ENCODE measurements at regions of chr15 and their contacts with region 1.

Region 1: GRCh38 chr15:39054128-39054732 is 489.6 kb upstream of the RASGRP1 start:
- DNase-seq: no peak
- H3K4me3 ChIP-seq: no peak overlapping the region
- H3K27ac ChIP-seq: no peak overlapping the region
- H3K4me1 ChIP-seq: peaks cover 0 to 6% (median 0%) of the 10 kb centered on the region in 4 donors
- H3K27me3 ChIP-seq: no peaks in the 10 kb centered on the region
- CTCF ChIP-seq: no peak
- EP300 ChIP-seq: no peak
- POLR2A ChIP-seq: no peak

Region 2: GRCh38 chr15:38722236-38722635 is 332.0 kb before region 1 on chr15:
- in situ Hi-C with region 1: no loop called
- intact Hi-C with region 1: loop called (anchors 2 kb)
- DNase-seq: no peak
- H3K4me3 ChIP-seq: no peak overlapping the region
- H3K27ac ChIP-seq: no peak overlapping the region
- H3K4me1 ChIP-seq: no peaks in the 10 kb centered on the region
- H3K27me3 ChIP-seq: no peaks in the 10 kb centered on the region
- CTCF ChIP-seq: no peak
- EP300 ChIP-seq: no peak
- POLR2A ChIP-seq: no peak

Region 3: DNA sequence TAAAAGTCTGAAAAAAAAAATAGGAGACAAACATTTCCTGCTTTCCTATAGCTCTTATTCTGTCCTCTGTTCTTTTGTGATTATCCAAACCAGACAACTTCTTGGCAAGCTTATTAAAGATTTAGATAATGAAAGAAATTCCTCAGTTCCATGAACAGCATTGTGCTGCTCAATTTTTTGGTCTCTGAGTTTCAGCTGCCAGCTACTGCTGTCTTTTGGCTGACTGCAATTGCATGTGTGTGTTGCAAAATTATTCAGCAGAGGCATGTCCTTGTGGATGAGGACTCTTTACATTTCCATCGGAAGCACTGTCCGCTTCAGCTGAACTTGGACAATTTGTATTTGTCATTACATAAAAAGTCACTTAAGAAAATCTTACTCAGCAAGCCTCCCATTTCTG is 92.3 kb before region 1 on chr15:
- in situ Hi-C with region 1: no loop called
- intact Hi-C with region 1: no loop called
- DNase-seq: no peak
- H3K4me3 ChIP-seq: no peak overlapping the region
- H3K27ac ChIP-seq: no peak overlapping the region
- H3K4me1 ChIP-seq: peaks cover 0 to 2% (median 0%) of the 10 kb centered on the region in 4 donors
- H3K27me3 ChIP-seq: no peaks in the 10 kb centered on the region
- CTCF ChIP-seq: no peak
- EP300 ChIP-seq: no peak
- POLR2A ChIP-seq: no peak

Region 4: GRCh38 chr15:39095218-39095879 is 41.1 kb after region 1 on chr15:
- in situ Hi-C with region 1: no loop called
- intact Hi-C with region 1: no loop called
- DNase-seq: no peak
- H3K4me3 ChIP-seq: no peak overlapping the region
- H3K27ac ChIP-seq: peak overlapping the region; percentile 9 to 38 (median 36)
- H3K4me1 ChIP-seq: peaks cover 0 to 9% (median 0%) of the 10 kb centered on the region in 4 donors
- H3K27me3 ChIP-seq: no peaks in the 10 kb centered on the region
- CTCF ChIP-seq: no peak
- EP300 ChIP-seq: no peak
- POLR2A ChIP-seq: no peak

Measured in transverse colon (tissue), 4 donors.